A673 (cell line): ENCODE measurements at regions of chr5 and their contacts with region 1.

Region 1: GRCh38 chr5:83253720-83254119 is 176.4 kb downstream of the XRCC4 start:
- DNase-seq: no peak
- H3K4me3 ChIP-seq: no peak overlapping the region
- H3K27ac ChIP-seq: no peak overlapping the region
- H3K4me1 ChIP-seq: no peaks in the 10 kb centered on the region
- H3K27me3 ChIP-seq: no peaks in the 10 kb centered on the region
- CTCF ChIP-seq: no peak

Region 2: GRCh38 chr5:82197550-82197949 is 1056.2 kb before region 1 on chr5:
- CTCF ChIA-PET with region 1: no interaction called
- POLR2A ChIA-PET with region 1: no interaction called
- intact Hi-C with region 1: no loop called
- DNase-seq: no peak
- H3K4me3 ChIP-seq: no peak overlapping the region
- H3K27ac ChIP-seq: no peak overlapping the region
- H3K4me1 ChIP-seq: no peaks in the 10 kb centered on the region
- H3K27me3 ChIP-seq: no peaks in the 10 kb centered on the region
- CTCF ChIP-seq: no peak

Region 3: DNA sequence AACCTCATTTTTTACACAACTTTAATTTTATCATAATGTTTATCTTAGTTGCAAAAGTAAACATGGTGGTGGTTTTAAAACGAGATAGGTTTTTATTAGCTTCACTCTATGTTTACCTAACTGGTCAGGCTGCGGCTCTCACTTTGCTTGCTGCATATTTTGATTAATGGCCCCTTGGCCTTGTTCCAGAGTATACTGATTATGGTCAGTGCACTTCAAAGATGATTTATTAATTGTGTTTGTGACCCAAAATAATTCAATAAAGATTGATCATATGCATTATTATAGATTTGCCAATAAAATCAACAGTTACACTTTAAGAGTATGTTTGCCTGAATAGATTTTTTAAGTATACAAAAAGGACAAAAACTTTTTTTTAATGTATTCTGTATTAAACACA is 11.6 kb after region 1 on chr5:
- CTCF ChIA-PET with region 1: no interaction called
- POLR2A ChIA-PET with region 1: interaction called, 10 read pairs
- intact Hi-C with region 1: no loop called
- DNase-seq: no peak
- H3K4me3 ChIP-seq: no peak overlapping the region
- H3K27ac ChIP-seq: no peak overlapping the region
- H3K4me1 ChIP-seq: no peaks in the 10 kb centered on the region
- H3K27me3 ChIP-seq: no peaks in the 10 kb centered on the region
- CTCF ChIP-seq: no peak

Region 4: DNA sequence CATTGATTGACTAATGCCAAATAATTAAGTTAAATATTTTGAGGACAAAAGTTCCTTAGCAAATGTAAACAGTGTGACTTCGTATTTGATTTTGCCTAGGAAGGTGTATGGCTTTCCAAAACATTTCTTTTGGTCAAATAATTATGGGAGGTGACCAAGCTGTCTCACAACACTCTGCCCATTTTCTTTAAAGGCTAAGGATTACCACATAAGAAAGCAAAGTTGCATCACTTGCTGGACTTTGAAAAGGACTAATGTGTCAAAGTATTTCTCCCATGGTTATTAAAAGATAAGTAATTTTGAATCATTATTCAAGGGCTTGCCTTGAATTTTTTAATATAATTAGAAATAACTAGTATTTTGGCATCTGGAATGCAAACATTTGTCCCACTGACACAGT is 392.2 kb after region 1 on chr5:
- CTCF ChIA-PET with region 1: no interaction called
- POLR2A ChIA-PET with region 1: no interaction called
- intact Hi-C with region 1: no loop called
- DNase-seq: no peak
- H3K4me3 ChIP-seq: no peak overlapping the region
- H3K27ac ChIP-seq: no peak overlapping the region
- H3K4me1 ChIP-seq: no peaks in the 10 kb centered on the region
- H3K27me3 ChIP-seq: no peaks in the 10 kb centered on the region
- CTCF ChIP-seq: no peak

Region 5: GRCh38 chr5:83662558-83662957 is 408.8 kb after region 1 on chr5:
- CTCF ChIA-PET with region 1: no interaction called
- POLR2A ChIA-PET with region 1: no interaction called
- intact Hi-C with region 1: no loop called
- DNase-seq: no peak
- H3K4me3 ChIP-seq: no peak overlapping the region
- H3K27ac ChIP-seq: no peak overlapping the region
- H3K4me1 ChIP-seq: peaks cover 6% of the 10 kb centered on the region
- H3K27me3 ChIP-seq: no peaks in the 10 kb centered on the region
- CTCF ChIP-seq: no peak